CD4-positive, alpha-beta memory T cell (primary cell): ENCODE measurements at regions of chr11 and their contacts with region 1.

Region 1: DNA sequence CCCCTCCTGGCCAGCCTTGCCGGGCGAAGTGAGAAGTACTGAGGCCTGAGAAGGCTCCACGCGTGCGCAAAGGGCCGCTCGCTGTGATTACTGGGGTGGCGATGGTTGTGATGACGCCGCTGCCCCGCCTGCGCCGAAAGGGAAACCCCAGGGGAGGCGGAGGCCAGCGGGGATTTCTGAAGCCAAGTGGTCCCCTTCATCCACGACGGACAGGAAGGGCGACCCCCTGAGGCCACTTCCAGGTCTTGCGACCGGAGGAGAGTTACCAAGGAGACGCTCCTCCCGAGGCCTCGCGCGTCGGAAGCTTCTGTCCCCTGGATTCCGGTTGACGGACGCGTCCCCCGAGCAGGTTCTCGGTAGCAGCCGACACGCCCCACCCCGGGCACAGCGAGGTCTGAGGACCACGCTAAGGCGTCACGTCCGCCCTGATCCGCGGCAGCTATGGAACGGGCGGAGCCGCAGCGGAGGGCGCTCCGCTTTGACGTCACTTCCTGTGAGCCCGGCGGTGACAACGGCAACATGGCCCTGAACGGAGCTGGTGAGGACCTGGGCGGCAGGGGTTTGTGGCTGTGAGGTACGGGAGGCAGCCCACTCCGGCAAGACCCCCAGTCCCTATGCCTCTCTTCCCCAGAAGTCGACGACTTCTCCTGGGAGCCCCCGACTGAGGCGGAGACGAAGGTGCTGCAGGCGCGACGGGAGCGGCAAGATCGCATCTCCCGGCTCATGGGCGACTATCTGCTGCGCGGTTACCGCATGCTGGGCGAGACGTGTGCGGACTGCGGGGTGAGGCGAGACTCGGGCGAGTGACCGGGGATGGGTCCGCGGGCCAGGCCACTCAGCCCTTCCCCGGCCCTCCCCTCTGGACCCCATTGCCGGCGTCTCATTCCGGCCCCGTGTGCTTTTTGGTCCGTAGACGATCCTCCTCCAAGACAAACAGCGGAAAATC is at the start of gene ZNRD2:
- DNase-seq: peak; percentile 98 to 99 (median 99)
- H3K4me3 ChIP-seq: peak within 1 kb of the TSS; percentile 71 to 94
- H3K4me3 Mint-ChIP-seq: peak within 1 kb of the TSS; percentile 97 to 100 (median 98)
- H3K27ac ChIP-seq: peak within 1 kb of the TSS; percentile 99
- H3K27ac Mint-ChIP-seq: peak within 1 kb of the TSS; percentile 99 to 100 (median 99)
- H3K4me1 ChIP-seq: peaks cover 75% of the 10 kb centered on the region
- H3K4me1 Mint-ChIP-seq: peaks cover 44 to 92% (median 65%) of the 10 kb centered on the region in 4 donors
- H3K27me3 ChIP-seq: no peaks in the 10 kb centered on the region
- H3K27me3 Mint-ChIP-seq: peaks cover 0 to 3% of the 10 kb centered on the region in 2 donors
- total RNA-seq, gene ZNRD2: 24.6 to 27.5 TPM

Region 2: DNA sequence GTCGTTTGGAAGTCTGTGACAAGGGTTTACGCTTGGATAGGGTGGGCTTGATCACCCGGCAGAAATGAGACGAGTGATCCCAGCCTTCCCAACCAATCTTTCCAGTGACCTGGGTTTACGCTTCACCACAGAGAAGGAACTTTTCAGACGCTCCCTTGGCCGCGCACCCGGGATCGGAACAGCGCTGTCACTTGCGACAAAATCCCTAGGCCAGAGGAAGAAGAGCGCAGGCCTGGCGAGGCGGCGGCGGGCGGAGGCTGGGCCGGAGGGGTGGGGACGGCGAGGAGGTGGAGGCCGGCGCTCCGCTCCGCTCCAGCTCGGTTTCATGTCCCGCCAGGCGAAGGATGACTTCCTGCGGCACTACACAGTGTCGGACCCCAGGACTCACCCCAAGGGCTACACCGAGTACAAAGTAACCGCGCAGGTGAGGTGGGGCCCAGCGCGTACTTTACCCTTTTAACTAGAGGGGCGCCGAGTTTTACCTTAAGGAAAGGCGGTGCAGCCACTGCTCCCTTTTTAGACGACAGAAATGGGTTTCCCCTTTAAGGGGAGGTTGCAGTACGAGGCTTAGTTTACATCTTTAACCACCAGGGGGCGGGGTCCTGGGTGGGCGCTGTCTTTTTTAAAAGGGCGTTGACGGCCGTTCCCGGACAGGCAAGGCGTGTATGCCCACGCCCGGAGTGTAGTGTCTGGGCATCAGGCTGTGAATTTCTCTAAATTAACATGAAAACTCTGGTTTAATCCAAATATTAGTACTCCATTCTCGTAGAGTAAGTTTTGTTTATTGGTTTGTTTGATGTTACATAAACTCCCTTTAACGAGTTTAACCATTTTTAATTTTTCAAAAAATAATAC is 542.8 kb before region 1 on chr11 and contains the start of gene SNX15:
- CTCF ChIA-PET with region 1: no interaction called
- POLR2A ChIA-PET with region 1: no interaction called
- intact Hi-C with region 1: loop called (anchors 5 kb)
- DNase-seq: peak; percentile 94 to 96 (median 95)
- H3K4me3 ChIP-seq: peak within 1 kb of the TSS in 1 of 2 donors; percentile 52
- H3K4me3 Mint-ChIP-seq: peak within 1 kb of the TSS; percentile 69 to 88 (median 81)
- H3K27ac ChIP-seq: peak within 1 kb of the TSS; percentile 61
- H3K27ac Mint-ChIP-seq: peak within 1 kb of the TSS; percentile 88 to 96 (median 91)
- H3K4me1 ChIP-seq: peaks cover 19% of the 10 kb centered on the region
- H3K4me1 Mint-ChIP-seq: peaks cover 9 to 30% (median 17%) of the 10 kb centered on the region in 4 donors
- H3K27me3 ChIP-seq: no peaks in the 10 kb centered on the region
- H3K27me3 Mint-ChIP-seq: no peaks in the 10 kb centered on the region
- total RNA-seq, gene SNX15: 24.5 to 26.7 TPM

Region 3: DNA sequence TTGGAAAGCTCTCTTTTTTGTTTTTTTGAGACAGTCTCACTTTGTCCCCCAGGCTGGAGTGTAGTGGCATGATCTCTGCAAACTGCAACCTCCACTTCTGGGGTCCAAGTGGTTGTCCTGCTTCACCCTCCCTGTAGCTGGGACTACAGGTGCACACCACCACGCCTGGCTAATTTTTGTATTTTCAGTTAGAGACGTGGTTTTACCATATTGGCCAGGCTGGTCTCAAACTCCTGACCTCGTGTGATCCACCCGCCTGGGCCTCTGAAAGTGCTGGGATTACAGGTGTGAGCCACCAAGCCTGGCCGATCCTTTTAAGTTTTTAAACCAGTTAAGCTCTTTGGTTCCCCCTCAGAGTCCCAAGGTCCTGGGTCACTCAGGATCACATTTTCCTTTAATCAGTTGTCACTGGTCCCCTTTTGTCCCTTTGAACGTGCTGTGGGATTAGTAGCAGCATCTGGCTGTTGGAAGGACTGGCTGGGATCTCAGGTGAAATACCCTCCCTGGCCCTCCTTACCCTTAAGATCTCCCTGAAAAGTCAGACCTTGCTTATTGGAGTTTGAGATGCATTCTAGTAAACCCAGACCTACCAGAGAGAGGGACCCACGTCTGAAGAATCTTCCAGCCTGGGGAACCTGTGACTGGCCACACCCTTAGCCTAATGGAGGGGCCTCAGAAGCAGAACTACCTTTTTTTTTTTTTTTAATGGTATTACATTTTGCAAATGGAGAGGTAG is 63.3 kb before region 1 on chr11:
- CTCF ChIA-PET with region 1: no interaction called
- POLR2A ChIA-PET with region 1: interaction called, 25 read pairs
- intact Hi-C with region 1: no loop called
- DNase-seq: peak in 3 of 5 donors; percentile 40 to 72 (median 52)
- H3K4me3 ChIP-seq: no peak overlapping the region
- H3K4me3 Mint-ChIP-seq: no peak overlapping the region
- H3K27ac ChIP-seq: peak overlapping the region; percentile 35
- H3K27ac Mint-ChIP-seq: peak overlapping the region in 6 of 7 donors; percentile 84 to 96 (median 93)
- H3K4me1 ChIP-seq: peaks cover 52% of the 10 kb centered on the region
- H3K4me1 Mint-ChIP-seq: peaks cover 35 to 64% (median 50%) of the 10 kb centered on the region in 4 donors
- H3K27me3 ChIP-seq: no peaks in the 10 kb centered on the region
- H3K27me3 Mint-ChIP-seq: no peaks in the 10 kb centered on the region

Region 4: GRCh38 chr11:65546217-65546958 is 23.9 kb before region 1 on chr11:
- CTCF ChIA-PET with region 1: interaction called, 66 read pairs
- POLR2A ChIA-PET with region 1: interaction called, 403 read pairs
- intact Hi-C with region 1: no loop called
- DNase-seq: peak; percentile 96 to 99 (median 97)
- H3K4me3 ChIP-seq: peak overlapping the region in 1 of 2 donors; percentile 41
- H3K4me3 Mint-ChIP-seq: peak overlapping the region; percentile 79 to 92 (median 80)
- H3K27ac ChIP-seq: peak overlapping the region; percentile 59
- H3K27ac Mint-ChIP-seq: peak overlapping the region; percentile 81 to 97 (median 94)
- H3K4me1 ChIP-seq: peaks cover 46% of the 10 kb centered on the region
- H3K4me1 Mint-ChIP-seq: peaks cover 31 to 65% (median 43%) of the 10 kb centered on the region in 4 donors
- H3K27me3 ChIP-seq: no peaks in the 10 kb centered on the region
- H3K27me3 Mint-ChIP-seq: no peaks in the 10 kb centered on the region

Region 5: GRCh38 chr11:65588199-65589054 is 18.2 kb after region 1 on chr11:
- CTCF ChIA-PET with region 1: interaction called, 50 read pairs
- POLR2A ChIA-PET with region 1: interaction called, 118 read pairs
- intact Hi-C with region 1: loop called (anchors 1 kb)
- DNase-seq: peak; percentile 78 to 82 (median 78)
- H3K4me3 ChIP-seq: no peak overlapping the region
- H3K4me3 Mint-ChIP-seq: peak overlapping the region in 3 of 8 donors; percentile 11 to 46 (median 25)
- H3K27ac ChIP-seq: peak overlapping the region; percentile 57
- H3K27ac Mint-ChIP-seq: peak overlapping the region; percentile 77 to 91 (median 87)
- H3K4me1 ChIP-seq: peaks cover 17% of the 10 kb centered on the region
- H3K4me1 Mint-ChIP-seq: peaks cover 13 to 33% (median 20%) of the 10 kb centered on the region in 4 donors
- H3K27me3 ChIP-seq: no peaks in the 10 kb centered on the region
- H3K27me3 Mint-ChIP-seq: no peaks in the 10 kb centered on the region

Region 6: DNA sequence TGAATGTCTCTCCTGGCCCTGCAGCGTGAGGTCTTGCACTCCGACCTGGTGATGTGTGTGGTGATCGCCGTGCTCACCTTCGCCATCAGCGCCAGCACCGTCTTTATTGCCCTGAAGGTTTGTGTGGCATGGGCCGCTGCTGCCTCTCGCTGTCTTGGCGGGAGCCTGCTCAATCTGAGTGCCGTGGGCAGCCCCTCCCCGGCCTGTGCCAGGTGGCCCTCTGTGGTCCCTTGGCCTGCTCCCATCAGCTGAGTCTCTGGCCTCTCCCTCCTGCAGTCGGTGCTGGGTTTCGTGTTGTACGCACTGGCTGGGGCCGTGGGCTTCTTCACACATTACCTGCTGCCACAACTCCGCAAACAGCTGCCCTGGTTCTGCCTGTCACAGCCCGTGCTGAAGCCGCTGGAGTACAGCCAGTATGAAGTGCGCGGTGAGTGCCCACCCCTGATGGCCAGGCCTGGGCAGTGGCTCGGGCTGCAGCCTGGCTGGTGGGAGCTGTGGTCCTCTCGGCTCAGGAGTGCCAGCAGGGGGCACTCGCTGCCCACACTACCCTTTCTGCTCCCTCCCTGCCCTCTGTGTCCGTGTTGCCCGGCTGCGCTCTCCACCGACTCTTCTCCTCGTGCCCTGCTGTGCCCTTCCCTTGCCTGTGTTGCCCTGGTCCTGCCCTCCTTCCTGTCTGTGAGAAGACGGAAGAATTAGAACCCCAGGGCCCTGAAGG is 55.5 kb after region 1 on chr11:
- CTCF ChIA-PET with region 1: no interaction called
- POLR2A ChIA-PET with region 1: no interaction called
- intact Hi-C with region 1: no loop called
- DNase-seq: peak in 4 of 5 donors; percentile 57 to 65 (median 62)
- H3K4me3 ChIP-seq: no peak overlapping the region
- H3K4me3 Mint-ChIP-seq: no peak overlapping the region
- H3K27ac ChIP-seq: no peak overlapping the region
- H3K27ac Mint-ChIP-seq: peak overlapping the region in 3 of 7 donors; percentile 60 to 85 (median 73)
- H3K4me1 ChIP-seq: no peaks in the 10 kb centered on the region
- H3K4me1 Mint-ChIP-seq: peaks cover 6 to 18% (median 6%) of the 10 kb centered on the region in 4 donors
- H3K27me3 ChIP-seq: no peaks in the 10 kb centered on the region
- H3K27me3 Mint-ChIP-seq: no peaks in the 10 kb centered on the region

Region 7: DNA sequence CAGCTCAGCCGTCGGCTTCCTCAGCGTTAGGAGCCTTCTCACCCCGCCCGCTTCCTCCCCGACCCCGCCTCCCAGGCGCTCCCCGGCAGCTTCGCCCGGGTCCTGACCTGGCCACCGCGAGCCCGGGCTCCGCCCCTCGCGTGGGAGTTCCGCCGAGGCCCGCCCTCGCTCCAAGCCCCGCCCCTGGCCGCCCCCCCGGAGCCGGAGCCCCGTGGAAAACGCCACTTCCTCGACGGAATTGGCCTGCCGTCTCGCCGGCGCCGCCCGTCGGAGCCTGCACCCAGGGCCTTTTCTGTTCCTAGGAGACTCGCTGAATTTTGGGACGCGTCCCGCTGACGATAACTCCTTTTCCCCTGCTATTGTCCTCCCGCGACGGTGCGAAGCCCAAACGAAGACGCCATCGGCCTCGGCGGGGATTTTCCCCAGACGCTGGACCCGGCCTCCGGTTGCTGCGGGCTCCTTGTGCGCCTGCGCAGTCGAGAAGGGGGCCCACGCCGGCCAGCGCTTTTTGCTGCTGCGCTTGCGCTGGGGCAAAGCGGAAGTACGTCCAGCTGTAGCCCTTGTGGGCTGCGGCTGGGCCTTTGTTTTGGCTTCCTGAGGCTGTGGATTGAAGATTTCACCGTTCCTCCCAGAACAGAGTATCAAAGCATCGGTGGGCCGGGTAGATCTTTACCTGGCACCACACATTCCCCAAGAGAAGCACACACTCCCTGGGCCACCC is 82.4 kb after region 1 on chr11:
- CTCF ChIA-PET with region 1: no interaction called
- POLR2A ChIA-PET with region 1: interaction called, 18 read pairs
- intact Hi-C with region 1: loop called (anchors 2 kb)
- DNase-seq: peak; percentile 95 to 99 (median 97)
- H3K4me3 ChIP-seq: peak overlapping the region; percentile 50 to 64
- H3K4me3 Mint-ChIP-seq: peak overlapping the region; percentile 88 to 95 (median 91)
- H3K27ac ChIP-seq: peak overlapping the region; percentile 91
- H3K27ac Mint-ChIP-seq: peak overlapping the region; percentile 96 to 99 (median 98)
- H3K4me1 ChIP-seq: peaks cover 35% of the 10 kb centered on the region
- H3K4me1 Mint-ChIP-seq: peaks cover 34 to 59% (median 48%) of the 10 kb centered on the region in 4 donors
- H3K27me3 ChIP-seq: no peaks in the 10 kb centered on the region
- H3K27me3 Mint-ChIP-seq: no peaks in the 10 kb centered on the region

Region 8: GRCh38 chr11:65680192-65680743 is 110.0 kb after region 1 on chr11:
- CTCF ChIA-PET with region 1: no interaction called
- POLR2A ChIA-PET with region 1: no interaction called
- intact Hi-C with region 1: no loop called
- DNase-seq: no peak
- H3K4me3 ChIP-seq: no peak overlapping the region
- H3K4me3 Mint-ChIP-seq: no peak overlapping the region
- H3K27ac ChIP-seq: no peak overlapping the region
- H3K27ac Mint-ChIP-seq: no peak overlapping the region
- H3K4me1 ChIP-seq: no peaks in the 10 kb centered on the region
- H3K4me1 Mint-ChIP-seq: no peaks in the 10 kb centered on the region
- H3K27me3 ChIP-seq: no peaks in the 10 kb centered on the region
- H3K27me3 Mint-ChIP-seq: peaks cover 2% of the 10 kb centered on the region in 2 donors